K562 (cell line): ENCODE measurements at regions of chr4 and their contacts with region 1.

Region 1: GRCh38 chr4:53592686-53593501 is 1.6 kb upstream of the LNX1 start:
- DNase-seq: peak; percentile 66 to 80 (median 69)
- ATAC-seq: peak; percentile 89
- H3K4me3 ChIP-seq: peak overlapping the region; percentile 36
- H3K27ac ChIP-seq: peak overlapping the region; percentile 74
- H3K4me1 ChIP-seq: peaks cover 4 to 30% of the 10 kb centered on the region in 2 experiments; a peak in 4 of 5 replicates
- H3K27me3 ChIP-seq: no peaks in the 10 kb centered on the region
- CTCF ChIP-seq: no peak
- EP300 ChIP-seq: no peak
- POLR2A ChIP-seq: no peak; the same call in 1 of the 2 replicates
- RAD21 ChIP-seq: no peak

Region 2: GRCh38 chr4:53419208-53419607 is 173.7 kb before region 1 on chr4:
- CTCF ChIA-PET with region 1: no interaction called
- POLR2A ChIA-PET with region 1: no interaction called
- in situ Hi-C with region 1: no loop called
- intact Hi-C with region 1: loop called (anchors 10 kb)
- DNase-seq: no peak
- ATAC-seq: no peak
- H3K4me3 ChIP-seq: no peak overlapping the region
- H3K27ac ChIP-seq: no peak overlapping the region
- H3K4me1 ChIP-seq: no peaks in the 10 kb centered on the region
- H3K27me3 ChIP-seq: no peaks in the 10 kb centered on the region
- CTCF ChIP-seq: no peak
- EP300 ChIP-seq: no peak
- POLR2A ChIP-seq: no peak
- RAD21 ChIP-seq: no peak

Region 3: DNA sequence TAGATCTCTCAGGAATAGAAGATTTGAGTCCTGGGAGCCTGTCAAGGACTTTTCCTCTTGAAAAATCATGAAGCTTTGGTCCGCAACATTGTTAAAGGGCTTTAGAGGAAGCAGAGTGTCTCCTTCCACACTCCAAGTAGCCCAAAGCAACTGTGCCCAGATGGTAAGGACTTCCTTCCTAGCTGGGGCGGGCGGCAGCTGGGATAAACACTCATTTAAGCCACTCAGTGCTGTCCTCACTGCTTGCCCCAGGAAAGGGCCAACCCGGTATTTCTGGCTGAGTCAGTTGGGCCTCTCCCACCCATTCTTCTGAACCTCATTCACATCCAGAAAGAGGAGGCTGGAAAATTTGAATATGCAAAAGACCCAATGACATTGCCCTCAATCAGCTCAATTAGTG is 327.2 kb after region 1 on chr4:
- CTCF ChIA-PET with region 1: no interaction called
- POLR2A ChIA-PET with region 1: no interaction called
- in situ Hi-C with region 1: no loop called
- intact Hi-C with region 1: no loop called
- DNase-seq: no peak
- ATAC-seq: no peak
- H3K4me3 ChIP-seq: no peak overlapping the region
- H3K27ac ChIP-seq: no peak overlapping the region
- H3K4me1 ChIP-seq: no peaks in the 10 kb centered on the region
- H3K27me3 ChIP-seq: peaks cover 0 to 10% of the 10 kb centered on the region in 2 experiments; a peak in 2 of 5 replicates
- CTCF ChIP-seq: no peak
- EP300 ChIP-seq: no peak
- POLR2A ChIP-seq: no peak
- RAD21 ChIP-seq: no peak